CD8-positive, alpha-beta memory T cell (primary cell): ENCODE measurements at regions of chr6 and their contacts with region 1.

Region 1: GRCh38 chr6:150813319-150813992 is 52.0 kb upstream of the MTHFD1L start:
- DNase-seq: peak in 1 of 5 donors; percentile 54
- H3K4me3 ChIP-seq: no peak overlapping the region
- H3K4me3 Mint-ChIP-seq: peak overlapping the region in 1 of 7 donors; percentile 68
- H3K27ac ChIP-seq: no peak overlapping the region
- H3K27ac Mint-ChIP-seq: peak overlapping the region in 6 of 8 donors; percentile 1 to 86 (median 54)
- H3K4me1 ChIP-seq: no peaks in the 10 kb centered on the region
- H3K4me1 Mint-ChIP-seq: peaks cover 10 to 22% (median 20%) of the 10 kb centered on the region in 3 donors
- H3K27me3 ChIP-seq: no peaks in the 10 kb centered on the region
- H3K27me3 Mint-ChIP-seq: peaks cover 0 to 7% of the 10 kb centered on the region in 2 donors

Region 2: GRCh38 chr6:150395398-150396009 is 418.0 kb before region 1 on chr6:
- CTCF ChIA-PET with region 1: interaction called, 10 read pairs
- POLR2A ChIA-PET with region 1: no interaction called
- DNase-seq: peak; percentile 4 to 58 (median 13)
- H3K4me3 ChIP-seq: no peak overlapping the region
- H3K4me3 Mint-ChIP-seq: no peak overlapping the region
- H3K27ac ChIP-seq: no peak overlapping the region
- H3K27ac Mint-ChIP-seq: no peak overlapping the region
- H3K4me1 ChIP-seq: no peaks in the 10 kb centered on the region
- H3K4me1 Mint-ChIP-seq: no peaks in the 10 kb centered on the region
- H3K27me3 ChIP-seq: no peaks in the 10 kb centered on the region
- H3K27me3 Mint-ChIP-seq: peaks cover 10 to 33% of the 10 kb centered on the region in 2 donors

Region 3: DNA sequence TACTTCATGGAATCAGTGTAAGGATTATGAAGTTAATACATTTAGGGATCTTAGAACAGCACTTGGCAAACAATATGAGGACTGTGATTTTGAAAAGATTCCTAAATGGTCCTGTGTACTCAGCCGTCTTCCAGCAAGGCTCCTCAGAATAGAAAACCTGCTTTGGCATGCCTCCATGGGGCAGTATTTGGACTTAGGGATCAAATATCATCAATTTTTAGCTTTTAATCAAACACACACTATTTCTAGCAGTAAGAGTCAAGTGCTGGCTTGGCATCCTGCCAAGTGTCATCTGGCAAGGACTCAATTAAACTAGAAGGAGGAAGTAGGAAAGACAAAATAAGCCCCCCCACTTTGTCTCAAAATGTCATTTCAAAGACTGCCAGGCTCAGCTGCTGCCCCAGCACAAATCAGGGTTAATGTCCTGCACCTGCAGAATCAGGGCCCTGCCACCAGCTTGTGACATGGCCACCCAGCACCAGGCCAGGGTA is 403.8 kb before region 1 on chr6:
- CTCF ChIA-PET with region 1: interaction called, 11 read pairs
- POLR2A ChIA-PET with region 1: no interaction called
- DNase-seq: no peak
- H3K4me3 ChIP-seq: no peak overlapping the region
- H3K4me3 Mint-ChIP-seq: no peak overlapping the region
- H3K27ac ChIP-seq: no peak overlapping the region
- H3K27ac Mint-ChIP-seq: no peak overlapping the region
- H3K4me1 ChIP-seq: no peaks in the 10 kb centered on the region
- H3K4me1 Mint-ChIP-seq: no peaks in the 10 kb centered on the region
- H3K27me3 ChIP-seq: no peaks in the 10 kb centered on the region
- H3K27me3 Mint-ChIP-seq: peaks cover 17 to 68% of the 10 kb centered on the region in 2 donors

Region 4: GRCh38 chr6:150417899-150418826 is 395.3 kb before region 1 on chr6:
- CTCF ChIA-PET with region 1: interaction called, 95 read pairs
- POLR2A ChIA-PET with region 1: interaction called, 3 read pairs
- DNase-seq: peak in 4 of 5 donors; percentile 6 to 51 (median 32)
- H3K4me3 ChIP-seq: peak overlapping the region; percentile 53
- H3K4me3 Mint-ChIP-seq: peak overlapping the region; percentile 72 to 92 (median 77)
- H3K27ac ChIP-seq: no peak overlapping the region
- H3K27ac Mint-ChIP-seq: peak overlapping the region; percentile 6 to 96 (median 39)
- H3K4me1 ChIP-seq: peaks cover 3% of the 10 kb centered on the region
- H3K4me1 Mint-ChIP-seq: peaks cover 9 to 26% (median 20%) of the 10 kb centered on the region in 3 donors
- H3K27me3 ChIP-seq: no peaks in the 10 kb centered on the region
- H3K27me3 Mint-ChIP-seq: peaks cover 8 to 31% of the 10 kb centered on the region in 2 donors

Region 5: GRCh38 chr6:150765067-150765764 is 48.2 kb before region 1 on chr6:
- CTCF ChIA-PET with region 1: no interaction called
- POLR2A ChIA-PET with region 1: no interaction called
- DNase-seq: no peak
- H3K4me3 ChIP-seq: no peak overlapping the region
- H3K4me3 Mint-ChIP-seq: no peak overlapping the region
- H3K27ac ChIP-seq: no peak overlapping the region
- H3K27ac Mint-ChIP-seq: peak overlapping the region in 1 of 8 donors; percentile 85
- H3K4me1 ChIP-seq: no peaks in the 10 kb centered on the region
- H3K4me1 Mint-ChIP-seq: no peaks in the 10 kb centered on the region
- H3K27me3 ChIP-seq: no peaks in the 10 kb centered on the region
- H3K27me3 Mint-ChIP-seq: no peaks in the 10 kb centered on the region

Region 6: GRCh38 chr6:150775415-150776203 is 37.8 kb before region 1 on chr6:
- CTCF ChIA-PET with region 1: no interaction called
- POLR2A ChIA-PET with region 1: no interaction called
- DNase-seq: no peak
- H3K4me3 ChIP-seq: no peak overlapping the region
- H3K4me3 Mint-ChIP-seq: no peak overlapping the region
- H3K27ac ChIP-seq: no peak overlapping the region
- H3K27ac Mint-ChIP-seq: no peak overlapping the region
- H3K4me1 ChIP-seq: no peaks in the 10 kb centered on the region
- H3K4me1 Mint-ChIP-seq: peaks cover 3 to 5% (median 4%) of the 10 kb centered on the region in 3 donors
- H3K27me3 ChIP-seq: no peaks in the 10 kb centered on the region
- H3K27me3 Mint-ChIP-seq: peaks cover 0 to 2% of the 10 kb centered on the region in 2 donors

Region 7: GRCh38 chr6:150826788-150827187 is 13.3 kb after region 1 on chr6:
- CTCF ChIA-PET with region 1: interaction called, 15 read pairs
- POLR2A ChIA-PET with region 1: no interaction called
- DNase-seq: no peak
- H3K4me3 ChIP-seq: no peak overlapping the region
- H3K4me3 Mint-ChIP-seq: no peak overlapping the region
- H3K27ac ChIP-seq: no peak overlapping the region
- H3K27ac Mint-ChIP-seq: peak overlapping the region in 1 of 8 donors; percentile 86
- H3K4me1 ChIP-seq: no peaks in the 10 kb centered on the region
- H3K4me1 Mint-ChIP-seq: no peaks in the 10 kb centered on the region
- H3K27me3 ChIP-seq: no peaks in the 10 kb centered on the region
- H3K27me3 Mint-ChIP-seq: no peaks in the 10 kb centered on the region